Activated CD4-positive, alpha-beta memory T cell treated with anti-CD3 and anti-CD28 coated beads, Interleukin-2, amount 10 ng/mL, durations not matched to agents 7 days and 5 days (primary cell): ENCODE measurements at regions of chr2 and their contacts with region 1.

Region 1: DNA sequence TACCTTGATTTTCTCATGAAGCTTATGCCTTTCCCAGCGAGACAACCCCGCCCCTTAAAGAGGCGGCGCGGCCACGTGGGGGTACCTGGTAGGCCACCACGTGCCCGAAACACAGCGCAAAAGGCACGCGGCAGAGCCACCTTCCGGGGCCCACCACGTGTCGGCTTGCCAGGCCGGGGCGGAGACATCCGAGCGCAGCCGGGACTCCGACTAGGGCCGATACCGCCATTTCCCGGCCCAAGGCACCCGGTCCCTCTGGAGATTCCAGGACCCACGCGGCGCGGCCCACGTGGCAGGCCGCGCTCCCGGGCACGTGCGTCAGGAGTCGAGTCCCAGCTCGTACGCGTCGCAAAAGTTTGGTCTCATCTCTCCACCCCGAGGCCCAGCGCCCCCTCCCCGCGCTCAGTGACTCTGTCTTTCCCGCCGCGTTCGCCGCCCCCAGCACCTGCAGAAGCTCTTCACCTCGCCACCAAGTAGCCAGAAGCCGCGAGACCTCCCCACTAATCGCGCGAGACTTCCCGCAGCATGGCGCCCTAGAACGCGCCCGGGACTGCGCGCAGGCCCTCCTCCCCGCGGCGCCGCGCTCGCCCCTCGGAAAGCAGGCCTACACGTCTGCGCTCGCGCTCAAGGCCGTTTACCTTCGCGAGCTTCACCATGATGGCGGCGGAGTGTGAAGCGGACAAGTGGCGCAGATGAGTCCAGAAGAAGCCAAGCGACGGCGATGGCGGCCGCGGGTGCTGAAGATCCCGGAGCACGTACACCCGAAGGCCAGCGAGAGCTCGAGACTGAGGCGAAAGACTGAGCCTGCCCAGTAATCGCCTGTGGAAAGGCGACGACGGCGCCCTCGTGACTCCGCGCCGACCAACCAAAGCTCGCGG is at the start of gene NCL:
- DNase-seq: peak; percentile 90
- H3K4me3 Mint-ChIP-seq: peak within 1 kb of the TSS; percentile 99
- H3K27ac Mint-ChIP-seq: peak within 1 kb of the TSS; percentile 99
- H3K4me1 Mint-ChIP-seq: peaks cover 51% of the 10 kb centered on the region
- H3K27me3 Mint-ChIP-seq: no peaks in the 10 kb centered on the region
- total RNA-seq, gene NCL: 454 to 476 TPM

Region 2: DNA sequence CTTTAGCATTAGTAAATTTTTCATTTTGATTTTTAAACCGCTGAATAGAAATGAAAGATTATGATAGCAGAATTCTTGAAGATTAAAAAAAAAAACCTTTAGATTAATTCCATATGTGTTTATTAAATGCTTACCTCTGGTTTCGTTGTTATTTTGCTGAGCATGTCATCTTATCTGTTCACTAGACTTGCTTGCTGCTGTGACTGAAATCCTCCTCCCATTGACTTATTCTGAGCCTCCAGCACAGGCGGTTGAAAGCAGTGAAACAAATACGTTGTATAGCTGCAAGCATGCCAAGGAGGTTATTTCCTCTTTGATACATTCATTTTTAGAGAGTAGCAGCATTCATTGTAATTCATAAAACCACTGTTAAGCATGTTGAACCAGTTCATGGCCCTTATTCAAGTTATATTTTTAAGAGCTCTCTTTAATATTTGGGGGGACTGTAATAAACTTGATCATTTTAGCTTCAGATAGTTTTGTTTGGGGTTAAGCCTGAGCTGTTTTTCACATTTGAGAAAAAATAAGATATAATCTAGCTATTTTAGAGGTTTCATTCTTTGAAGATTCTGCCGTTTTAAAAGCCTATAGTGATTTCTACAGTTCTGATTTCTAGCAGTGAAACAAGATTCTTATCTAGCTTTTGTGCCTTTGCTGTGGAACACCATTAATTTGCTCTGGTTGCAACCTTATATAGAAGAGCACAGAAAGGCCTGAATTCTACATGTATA is 338.9 kb before region 1 on chr2 and contains the start of gene HTR2B:
- CTCF ChIA-PET with region 1: no interaction called
- POLR2A ChIA-PET with region 1: interaction called, 10 read pairs
- DNase-seq: no peak
- H3K4me3 Mint-ChIP-seq: peak within 1 kb of the TSS; percentile 59
- H3K27ac Mint-ChIP-seq: peak within 1 kb of the TSS; percentile 74
- H3K4me1 Mint-ChIP-seq: peaks cover 26% of the 10 kb centered on the region
- H3K27me3 Mint-ChIP-seq: no peaks in the 10 kb centered on the region
- total RNA-seq, gene HTR2B: 0.10 to 0.13 TPM

Region 3: GRCh38 chr2:231475965-231476364 is 12.0 kb after region 1 on chr2:
- CTCF ChIA-PET with region 1: interaction called, 95 read pairs
- POLR2A ChIA-PET with region 1: interaction called, 245 read pairs
- DNase-seq: no peak
- H3K4me3 Mint-ChIP-seq: no peak overlapping the region
- H3K27ac Mint-ChIP-seq: no peak overlapping the region
- H3K4me1 Mint-ChIP-seq: no peaks in the 10 kb centered on the region
- H3K27me3 Mint-ChIP-seq: no peaks in the 10 kb centered on the region

Region 4: DNA sequence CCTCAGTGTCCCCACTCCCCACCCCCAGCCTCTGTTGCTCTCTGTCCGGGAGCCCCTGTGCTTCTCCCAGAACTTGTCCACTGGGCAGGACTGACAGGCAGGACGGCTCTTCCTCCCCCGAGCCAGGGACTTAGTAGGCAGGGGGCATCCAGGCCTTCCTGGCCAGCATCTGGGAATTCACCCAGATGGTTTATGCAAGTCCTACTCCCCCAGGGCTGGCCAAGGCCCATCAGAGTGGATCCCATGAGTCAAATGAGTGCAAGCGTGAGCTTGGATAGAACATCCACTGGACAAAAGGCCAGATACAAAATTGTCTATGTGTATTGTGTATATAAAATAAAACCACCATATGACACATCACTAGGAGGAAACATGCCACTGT is 58.9 kb after region 1 on chr2:
- CTCF ChIA-PET with region 1: interaction called, 9 read pairs
- POLR2A ChIA-PET with region 1: interaction called, 14 read pairs
- DNase-seq: no peak
- H3K4me3 Mint-ChIP-seq: no peak overlapping the region
- H3K27ac Mint-ChIP-seq: no peak overlapping the region
- H3K4me1 Mint-ChIP-seq: peaks cover 57% of the 10 kb centered on the region
- H3K27me3 Mint-ChIP-seq: peaks cover 23% of the 10 kb centered on the region

Region 5: GRCh38 chr2:231604685-231605606 is 141.0 kb after region 1 on chr2:
- CTCF ChIA-PET with region 1: interaction called, 16 read pairs
- POLR2A ChIA-PET with region 1: interaction called, 9 read pairs
- DNase-seq: peak; percentile 95
- H3K4me3 Mint-ChIP-seq: peak overlapping the region; percentile 66
- H3K27ac Mint-ChIP-seq: peak overlapping the region; percentile 31
- H3K4me1 Mint-ChIP-seq: peaks cover 17% of the 10 kb centered on the region
- H3K27me3 Mint-ChIP-seq: no peaks in the 10 kb centered on the region

Region 6: DNA sequence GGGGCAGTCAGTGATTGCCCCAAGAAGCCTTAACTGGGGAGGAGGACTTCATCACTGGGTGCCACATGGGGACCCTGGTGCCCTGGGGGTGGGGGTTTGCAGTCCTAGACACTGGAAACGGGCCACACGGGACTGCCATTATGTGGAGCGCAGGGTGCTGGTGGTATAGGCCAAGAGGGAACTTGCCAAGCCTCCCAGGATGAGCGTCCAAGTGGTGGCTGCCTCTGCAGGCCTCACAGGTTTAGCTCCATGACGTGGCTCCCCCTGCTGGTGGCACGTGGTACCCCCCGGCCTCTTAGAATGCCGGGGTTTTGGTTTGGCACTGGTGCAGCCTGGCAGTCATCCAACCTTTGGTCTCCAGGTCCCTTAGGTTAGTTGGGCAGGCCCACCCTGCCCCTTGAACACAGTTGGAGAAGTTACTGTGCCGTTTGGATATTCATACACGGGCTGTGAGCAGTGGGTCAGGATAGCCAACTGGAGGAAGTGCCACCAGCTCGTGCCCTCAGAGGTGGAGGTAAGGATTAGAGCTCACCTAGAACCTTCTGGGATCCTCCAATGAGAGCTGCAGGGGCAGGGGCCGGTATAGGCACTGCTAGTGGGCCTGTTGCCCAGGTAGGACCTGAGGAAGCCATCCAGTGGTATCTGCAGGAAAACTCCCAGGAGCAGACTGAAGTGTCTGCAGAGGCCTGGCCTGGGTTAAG is 249.9 kb after region 1 on chr2:
- CTCF ChIA-PET with region 1: interaction called, 4 read pairs
- POLR2A ChIA-PET with region 1: interaction called, 55 read pairs
- DNase-seq: peak; percentile 90
- H3K4me3 Mint-ChIP-seq: peak overlapping the region; percentile 17
- H3K27ac Mint-ChIP-seq: peak overlapping the region; percentile 94
- H3K4me1 Mint-ChIP-seq: peaks cover 28% of the 10 kb centered on the region
- H3K27me3 Mint-ChIP-seq: no peaks in the 10 kb centered on the region

Region 7: GRCh38 chr2:231917280-231918066 is 453.5 kb after region 1 on chr2:
- CTCF ChIA-PET with region 1: no interaction called
- POLR2A ChIA-PET with region 1: no interaction called
- DNase-seq: no peak
- H3K4me3 Mint-ChIP-seq: no peak overlapping the region
- H3K27ac Mint-ChIP-seq: no peak overlapping the region
- H3K4me1 Mint-ChIP-seq: peaks cover 1% of the 10 kb centered on the region
- H3K27me3 Mint-ChIP-seq: peaks cover 7% of the 10 kb centered on the region